AG04450 (cell line): ENCODE measurements at regions of chr4 and their contacts with region 1.

Region 1: GRCh38 chr4:21790438-21791029 is 158.0 kb downstream of the KCNIP4 start:
- DNase-seq: no peak
- H3K4me3 ChIP-seq: no peak overlapping the region
- H3K27ac ChIP-seq: no peak overlapping the region
- H3K27me3 ChIP-seq: no peaks in the 10 kb centered on the region
- CTCF ChIP-seq: peak; percentile 41; the same call in 1 of the 2 replicates

Region 2: DNA sequence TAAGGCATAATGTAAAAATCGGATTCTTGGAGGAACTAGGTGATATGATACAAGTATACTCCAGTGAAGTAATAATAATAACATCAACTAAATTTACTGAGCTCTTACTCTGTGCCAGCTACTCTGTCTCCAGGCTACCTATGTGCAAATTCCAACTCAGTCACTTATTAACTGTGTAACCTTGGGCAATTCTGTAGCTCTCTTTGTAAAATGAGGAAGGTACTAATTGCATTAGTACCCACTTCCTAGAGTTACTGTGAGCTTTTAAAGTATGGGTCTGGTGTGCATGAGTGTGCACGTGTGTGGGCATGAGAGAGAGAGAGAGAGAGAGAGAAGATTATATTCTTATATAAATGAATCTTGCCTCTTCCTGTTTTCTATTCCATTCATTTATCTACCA is 11.8 kb before region 1 on chr4:
- CTCF ChIA-PET with region 1: interaction called, 12 read pairs
- POLR2A ChIA-PET with region 1: no interaction called
- DNase-seq: no peak
- H3K4me3 ChIP-seq: no peak overlapping the region
- H3K27ac ChIP-seq: no peak overlapping the region
- H3K27me3 ChIP-seq: no peaks in the 10 kb centered on the region
- CTCF ChIP-seq: no peak

Region 3: GRCh38 chr4:22356987-22357596 is 566.6 kb after region 1 on chr4:
- CTCF ChIA-PET with region 1: interaction called, 42 read pairs
- POLR2A ChIA-PET with region 1: no interaction called
- DNase-seq: no peak
- H3K4me3 ChIP-seq: no peak overlapping the region
- H3K27ac ChIP-seq: no peak overlapping the region
- H3K27me3 ChIP-seq: no peaks in the 10 kb centered on the region
- CTCF ChIP-seq: peak; percentile 45

Region 4: DNA sequence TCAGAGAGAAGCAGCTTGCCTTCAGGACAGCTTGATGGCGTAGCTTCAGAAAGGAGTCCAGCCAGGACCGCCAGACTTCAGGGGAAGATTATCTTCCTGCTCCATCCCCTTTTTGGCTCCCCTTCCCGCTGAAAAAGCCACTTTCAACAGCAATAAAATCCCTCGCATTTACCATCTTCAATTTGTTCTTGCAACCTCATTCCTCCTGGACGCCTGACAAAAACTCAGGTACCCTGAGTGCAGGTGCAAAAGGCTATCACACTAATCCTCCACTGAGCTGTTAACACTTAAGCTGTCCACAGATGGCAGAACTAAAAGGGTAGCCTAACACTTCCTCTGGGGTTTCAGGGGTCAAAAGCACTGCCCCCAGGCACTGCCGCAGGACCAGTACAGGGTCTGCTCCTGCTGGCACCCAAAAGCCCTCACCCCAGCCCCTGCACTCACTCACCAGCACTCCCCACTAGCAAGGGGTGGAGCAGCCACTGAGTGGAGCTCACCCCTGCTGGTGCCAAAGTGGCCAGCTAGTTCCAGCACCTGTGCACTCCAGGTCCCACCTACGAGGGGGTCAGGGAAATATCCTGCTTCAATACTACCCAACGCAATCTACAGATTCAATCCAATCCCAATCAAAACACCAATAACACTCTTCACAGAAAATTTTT is 579.5 kb after region 1 on chr4:
- CTCF ChIA-PET with region 1: interaction called, 30 read pairs
- POLR2A ChIA-PET with region 1: no interaction called
- DNase-seq: no peak
- H3K4me3 ChIP-seq: no peak overlapping the region
- H3K27ac ChIP-seq: no peak overlapping the region
- H3K27me3 ChIP-seq: no peaks in the 10 kb centered on the region
- CTCF ChIP-seq: no peak

Region 5: DNA sequence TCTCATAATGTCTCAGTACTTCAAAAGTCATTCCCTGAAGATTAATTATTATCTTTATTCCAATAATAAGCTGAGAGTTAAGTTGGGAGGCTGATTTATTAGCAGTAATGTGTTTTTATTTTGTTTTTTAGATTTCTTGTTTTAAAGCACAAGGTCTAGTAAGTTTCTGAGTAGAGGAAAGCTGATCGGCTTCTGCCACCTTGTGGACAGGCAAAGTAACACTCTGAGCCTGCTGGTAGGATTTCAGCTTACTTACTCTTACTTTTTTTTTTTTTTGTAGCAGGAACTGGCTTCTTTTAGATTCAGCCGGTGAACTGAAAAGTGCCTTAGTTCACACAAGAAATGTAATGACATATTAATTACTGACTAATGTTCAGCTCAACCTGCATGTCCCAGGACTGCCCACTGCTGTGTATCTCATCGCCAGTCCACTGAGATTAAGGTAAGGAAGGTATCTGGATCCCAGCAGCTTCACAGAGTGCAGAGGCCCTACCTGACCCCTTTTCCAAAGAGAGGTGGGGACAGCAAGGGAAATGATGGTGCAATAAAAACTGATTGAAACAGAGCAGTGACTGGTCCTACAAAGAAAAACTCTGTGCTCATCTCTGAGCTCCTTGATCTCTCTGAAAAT is 598.8 kb after region 1 on chr4:
- CTCF ChIA-PET with region 1: interaction called, 390 read pairs
- POLR2A ChIA-PET with region 1: no interaction called
- DNase-seq: peak; percentile 72
- H3K4me3 ChIP-seq: no peak overlapping the region
- H3K27ac ChIP-seq: no peak overlapping the region
- H3K27me3 ChIP-seq: no peaks in the 10 kb centered on the region
- CTCF ChIP-seq: peak; percentile 91

Region 6: DNA sequence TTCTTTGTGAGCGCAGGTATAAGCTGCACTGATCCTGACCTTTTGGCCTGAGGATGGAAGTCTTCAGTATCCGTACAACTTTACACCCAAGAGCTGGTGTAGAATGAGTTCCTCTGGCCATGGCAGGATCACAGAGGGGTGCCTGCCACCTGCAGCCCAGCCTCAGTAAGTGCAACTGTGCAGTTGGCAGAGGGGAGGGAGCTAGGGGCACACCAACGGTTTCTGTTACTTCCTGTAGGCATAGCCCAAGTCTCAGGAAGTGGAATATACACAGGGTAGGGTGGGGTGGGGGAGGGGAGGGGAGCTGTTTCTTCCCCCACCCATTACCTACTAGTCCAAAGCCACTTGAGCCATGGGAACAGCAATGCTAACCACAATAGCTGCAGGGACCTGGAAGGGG is 816.8 kb after region 1 on chr4:
- CTCF ChIA-PET with region 1: no interaction called
- POLR2A ChIA-PET with region 1: no interaction called
- DNase-seq: peak; percentile 23
- H3K4me3 ChIP-seq: no peak overlapping the region
- H3K27ac ChIP-seq: no peak overlapping the region
- H3K27me3 ChIP-seq: no peaks in the 10 kb centered on the region
- CTCF ChIP-seq: peak; percentile 69

Region 7: GRCh38 chr4:22692736-22693135 is 902.2 kb after region 1 on chr4 and contains the start of gene GBA3:
- CTCF ChIA-PET with region 1: interaction called, 18 read pairs
- POLR2A ChIA-PET with region 1: no interaction called
- DNase-seq: no peak
- H3K4me3 ChIP-seq: no peak within 1 kb of the TSS
- H3K27ac ChIP-seq: no peak within 1 kb of the TSS
- H3K27me3 ChIP-seq: no peaks in the 10 kb centered on the region
- CTCF ChIP-seq: no peak
- polyA plus RNA-seq, gene GBA3: not detected in 2 replicates